Posterior cingulate gyrus (tissue), 11 donors: ENCODE measurements at regions of chr19 and their contacts with region 1.

Region 1: GRCh38 chr19:2702162-2703076 is at the start of gene GNG7:
- DNase-seq: peak; percentile 86 to 100 (median 96)

Region 2: DNA sequence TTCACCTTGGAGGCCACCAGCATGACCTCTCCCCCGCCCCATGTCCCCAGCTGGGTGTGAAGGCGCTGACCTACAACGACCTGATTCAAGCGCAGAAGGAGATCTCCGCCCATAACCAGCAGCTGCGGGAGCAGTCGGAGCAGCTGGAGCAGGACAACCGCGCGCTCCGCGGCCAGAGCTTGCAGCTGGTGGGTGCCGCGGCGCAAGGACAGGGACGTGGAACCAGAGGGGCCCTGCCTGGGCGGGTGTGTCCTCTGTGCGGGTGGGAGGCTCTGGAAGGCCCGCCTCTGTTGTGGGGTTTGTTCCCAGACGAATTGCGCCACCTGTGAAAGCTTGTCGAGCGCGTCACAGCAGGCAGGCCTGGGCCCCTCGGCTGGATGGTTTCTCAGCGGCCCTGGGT is 488.6 kb before region 1 on chr19:
- intact Hi-C with region 1: no loop called
- DNase-seq: peak in 4 of 10 donors; percentile 17 to 91 (median 36)

Region 3: GRCh38 chr19:2719910-2720776 is 17.7 kb after region 1 on chr19:
- intact Hi-C with region 1: no loop called
- DNase-seq: peak in 9 of 10 donors; percentile 45 to 95 (median 75)

Region 4: DNA sequence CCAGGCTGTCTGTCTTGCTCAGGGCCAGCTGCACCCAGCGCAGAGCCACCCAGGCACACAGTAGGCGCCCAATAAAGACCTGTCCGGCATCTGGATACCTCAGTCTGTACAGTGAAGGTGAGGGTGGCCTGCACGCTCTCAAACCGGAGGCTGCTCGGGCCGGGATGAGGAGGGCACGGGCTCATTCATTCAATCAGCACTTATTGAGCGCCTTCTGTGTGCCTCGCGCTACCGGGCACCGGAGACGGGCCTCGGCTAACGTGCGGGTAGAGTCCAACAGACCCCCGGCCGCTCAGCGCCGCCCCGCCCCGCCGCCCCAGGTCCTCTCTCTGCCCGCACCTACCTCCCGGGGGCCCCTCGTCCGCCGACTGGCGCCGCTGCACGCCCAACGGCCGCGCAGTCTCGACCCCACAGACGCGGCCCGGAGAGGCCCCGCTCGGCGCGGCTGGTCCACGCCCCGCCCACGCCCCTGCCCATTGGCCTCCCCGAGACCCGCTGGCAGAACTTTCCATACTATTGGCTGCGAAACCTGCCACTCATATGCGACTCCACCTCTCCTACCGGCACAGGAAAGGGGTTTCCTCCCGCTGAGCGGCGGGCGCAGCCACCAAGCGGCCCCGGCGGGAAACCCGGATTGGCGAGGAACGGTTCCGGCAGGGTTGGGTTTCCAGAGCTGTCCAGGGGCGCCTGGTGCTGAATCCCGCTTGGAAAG is 37.3 kb after region 1 on chr19 and contains the start of gene SLC39A3:
- intact Hi-C with region 1: loop called (anchors 5 kb)
- DNase-seq: peak; percentile 94 to 99 (median 99)